Activated naive CD4-positive, alpha-beta T cell treated with anti-CD3 and anti-CD28 coated beads for 36 hours (primary cell): ENCODE measurements at regions of chr2 and their contacts with region 1.

Region 1: GRCh38 chr2:32063310-32064161 is at the start of gene SPAST:
- DNase-seq: peak; percentile 96
- H3K4me3 Mint-ChIP-seq: peak within 1 kb of the TSS; percentile 96
- H3K27ac Mint-ChIP-seq: peak within 1 kb of the TSS; percentile 89
- H3K4me1 Mint-ChIP-seq: peaks cover 24% of the 10 kb centered on the region
- H3K27me3 Mint-ChIP-seq: no peaks in the 10 kb centered on the region
- total RNA-seq, gene SPAST: 12.0 to 12.8 TPM

Region 2: DNA sequence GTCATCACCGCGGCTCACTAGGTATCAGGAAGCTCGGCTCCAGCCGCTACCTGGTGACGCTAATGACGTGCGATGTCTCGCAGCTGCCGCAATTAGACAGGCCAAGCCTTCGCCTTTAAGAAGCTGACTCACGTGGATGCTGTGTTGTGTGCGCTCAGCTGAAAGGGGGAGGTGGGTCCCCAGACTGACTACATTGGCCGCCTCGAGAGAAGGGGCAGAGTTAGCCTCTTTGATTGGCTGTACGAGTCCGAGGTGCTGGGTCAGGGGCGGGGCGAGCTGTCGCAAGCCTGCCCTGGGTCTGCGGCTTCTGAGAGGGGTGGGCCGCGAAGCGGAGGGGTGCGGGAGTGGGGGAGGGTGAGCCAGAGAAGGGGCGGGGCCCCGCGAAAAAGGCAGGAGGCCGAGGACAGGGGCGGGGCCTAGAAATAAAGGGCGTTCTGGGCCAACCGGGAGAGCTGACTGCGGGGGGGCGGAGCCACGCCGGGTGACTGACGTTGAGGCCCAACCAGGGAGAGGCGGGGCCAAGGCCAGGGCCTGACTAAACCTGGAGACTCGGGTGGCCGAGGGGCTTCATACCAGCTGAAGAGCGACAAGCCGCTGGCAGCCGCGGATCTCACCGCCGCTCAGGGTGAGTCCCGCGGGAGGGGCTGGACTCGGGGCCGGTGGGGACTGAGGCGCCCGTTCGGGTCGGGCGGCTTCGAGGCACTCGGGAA is 1916.9 kb before region 1 on chr2 and contains the start of gene YPEL5:
- CTCF ChIA-PET with region 1: no interaction called
- intact Hi-C with region 1: loop called (anchors 1 kb)
- DNase-seq: peak; percentile 99
- H3K4me3 Mint-ChIP-seq: peak within 1 kb of the TSS; percentile 84
- H3K27ac Mint-ChIP-seq: peak within 1 kb of the TSS; percentile 95
- H3K4me1 Mint-ChIP-seq: peaks cover 56% of the 10 kb centered on the region
- H3K27me3 Mint-ChIP-seq: no peaks in the 10 kb centered on the region
- total RNA-seq, gene YPEL5: 28.4 to 33.3 TPM

Region 3: DNA sequence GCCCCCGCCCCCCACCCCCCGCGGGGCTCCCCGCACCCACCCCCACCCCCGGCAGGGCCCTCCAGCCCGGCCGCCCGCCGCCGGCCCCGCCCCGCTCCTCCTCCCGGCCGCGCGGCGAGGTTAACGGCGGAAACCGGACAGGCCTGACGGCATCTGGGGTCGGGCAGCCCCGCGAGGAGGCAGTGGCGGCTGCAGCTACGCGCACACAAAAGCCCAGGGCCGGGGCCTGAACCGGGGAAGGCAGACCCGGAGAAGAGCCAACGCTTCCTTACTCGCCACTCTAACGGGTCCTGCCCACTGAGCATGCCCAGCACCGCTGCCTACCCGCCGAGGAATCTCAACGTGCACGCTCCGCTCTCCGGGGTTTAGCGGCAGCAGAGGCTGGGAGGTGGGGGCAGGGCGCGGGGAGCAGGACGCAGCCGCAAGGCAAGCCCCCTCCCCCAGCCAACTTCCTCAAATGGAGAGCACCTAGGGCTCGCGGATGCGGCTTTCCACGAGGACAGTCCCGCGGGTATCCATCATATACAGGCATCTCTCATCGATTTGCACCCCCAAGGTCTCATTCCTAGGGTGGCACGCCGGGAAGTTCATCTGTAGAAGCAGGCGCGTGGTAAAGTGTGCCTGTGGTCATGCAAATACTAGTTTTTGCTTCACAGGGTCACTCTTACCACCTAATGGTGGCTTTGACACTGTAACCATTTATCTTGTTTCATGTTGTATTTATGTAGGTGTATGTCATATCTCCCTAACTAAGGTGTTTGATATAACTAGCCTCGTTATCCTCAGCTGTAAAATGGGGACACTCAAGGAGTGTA is 52.7 kb before region 1 on chr2 and contains the start of gene MEMO1:
- CTCF ChIA-PET with region 1: interaction called, 3 read pairs
- intact Hi-C with region 1: loop called (anchors 1 kb)
- DNase-seq: peak; percentile 96
- H3K4me3 Mint-ChIP-seq: peak within 1 kb of the TSS; percentile 85
- H3K27ac Mint-ChIP-seq: peak within 1 kb of the TSS; percentile 92
- H3K4me1 Mint-ChIP-seq: peaks cover 41% of the 10 kb centered on the region
- H3K27me3 Mint-ChIP-seq: no peaks in the 10 kb centered on the region
- total RNA-seq, gene MEMO1: 39.5 to 42.0 TPM

Region 4: GRCh38 chr2:32135409-32135808 is 71.9 kb after region 1 on chr2:
- CTCF ChIA-PET with region 1: no interaction called
- intact Hi-C with region 1: loop called (anchors 1 kb)
- DNase-seq: no peak
- H3K4me3 Mint-ChIP-seq: no peak overlapping the region
- H3K27ac Mint-ChIP-seq: no peak overlapping the region
- H3K4me1 Mint-ChIP-seq: no peaks in the 10 kb centered on the region
- H3K27me3 Mint-ChIP-seq: no peaks in the 10 kb centered on the region

Region 5: DNA sequence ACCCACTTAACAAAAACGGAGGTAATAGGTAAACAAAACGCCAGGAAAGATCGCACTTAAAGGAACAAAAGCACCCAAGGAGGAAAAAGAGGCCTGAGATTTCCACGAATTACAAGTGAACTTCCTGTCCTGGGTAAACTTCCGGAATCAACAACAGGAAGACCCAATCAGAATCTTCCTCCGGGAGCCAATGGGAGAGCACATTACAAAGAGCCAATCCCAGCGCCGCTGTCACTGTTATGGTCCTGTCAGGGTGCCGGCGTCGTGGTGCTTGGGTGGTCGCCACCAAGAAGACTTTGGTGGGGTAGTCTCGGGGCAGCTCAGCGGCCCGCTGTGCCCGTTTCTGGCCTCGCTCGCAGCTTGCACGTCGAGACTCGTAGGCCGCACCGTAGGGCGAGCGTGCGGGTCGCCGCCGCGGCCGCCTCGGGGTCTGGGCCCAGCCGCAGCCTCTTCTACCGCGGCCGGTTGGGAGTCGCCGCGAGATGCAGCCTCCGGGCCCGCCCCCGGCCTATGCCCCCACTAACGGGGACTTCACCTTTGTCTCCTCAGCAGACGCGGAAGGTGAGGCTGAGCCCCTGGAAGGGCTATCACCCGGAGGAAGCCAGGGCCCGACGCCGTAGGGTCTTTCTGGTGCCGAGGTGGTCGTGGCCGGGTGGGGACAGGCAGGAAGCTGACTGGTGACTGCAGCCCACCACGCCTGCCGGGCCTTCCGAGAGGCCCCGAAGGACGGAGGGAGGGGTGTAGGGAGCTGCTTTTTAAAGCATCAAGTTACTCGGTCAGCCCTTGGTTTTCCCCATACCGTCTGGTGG is 214.3 kb after region 1 on chr2 and contains the start of gene YIPF4:
- CTCF ChIA-PET with region 1: no interaction called
- intact Hi-C with region 1: loop called (anchors 2 kb)
- DNase-seq: peak; percentile 91
- H3K4me3 Mint-ChIP-seq: peak within 1 kb of the TSS; percentile 84
- H3K27ac Mint-ChIP-seq: peak within 1 kb of the TSS; percentile 93
- H3K4me1 Mint-ChIP-seq: peaks cover 22% of the 10 kb centered on the region
- H3K27me3 Mint-ChIP-seq: no peaks in the 10 kb centered on the region
- total RNA-seq, gene YIPF4: 36.5 to 39.7 TPM

Region 6: GRCh38 chr2:32627814-32628579 is 564.5 kb after region 1 on chr2 and contains the start of gene TTC27:
- CTCF ChIA-PET with region 1: no interaction called
- intact Hi-C with region 1: loop called (anchors 1 kb)
- DNase-seq: peak; percentile 97
- H3K4me3 Mint-ChIP-seq: peak within 1 kb of the TSS; percentile 89
- H3K27ac Mint-ChIP-seq: peak within 1 kb of the TSS; percentile 87
- H3K4me1 Mint-ChIP-seq: peaks cover 31% of the 10 kb centered on the region
- H3K27me3 Mint-ChIP-seq: no peaks in the 10 kb centered on the region
- total RNA-seq, gene TTC27: 25.2 to 27.5 TPM

Region 7: DNA sequence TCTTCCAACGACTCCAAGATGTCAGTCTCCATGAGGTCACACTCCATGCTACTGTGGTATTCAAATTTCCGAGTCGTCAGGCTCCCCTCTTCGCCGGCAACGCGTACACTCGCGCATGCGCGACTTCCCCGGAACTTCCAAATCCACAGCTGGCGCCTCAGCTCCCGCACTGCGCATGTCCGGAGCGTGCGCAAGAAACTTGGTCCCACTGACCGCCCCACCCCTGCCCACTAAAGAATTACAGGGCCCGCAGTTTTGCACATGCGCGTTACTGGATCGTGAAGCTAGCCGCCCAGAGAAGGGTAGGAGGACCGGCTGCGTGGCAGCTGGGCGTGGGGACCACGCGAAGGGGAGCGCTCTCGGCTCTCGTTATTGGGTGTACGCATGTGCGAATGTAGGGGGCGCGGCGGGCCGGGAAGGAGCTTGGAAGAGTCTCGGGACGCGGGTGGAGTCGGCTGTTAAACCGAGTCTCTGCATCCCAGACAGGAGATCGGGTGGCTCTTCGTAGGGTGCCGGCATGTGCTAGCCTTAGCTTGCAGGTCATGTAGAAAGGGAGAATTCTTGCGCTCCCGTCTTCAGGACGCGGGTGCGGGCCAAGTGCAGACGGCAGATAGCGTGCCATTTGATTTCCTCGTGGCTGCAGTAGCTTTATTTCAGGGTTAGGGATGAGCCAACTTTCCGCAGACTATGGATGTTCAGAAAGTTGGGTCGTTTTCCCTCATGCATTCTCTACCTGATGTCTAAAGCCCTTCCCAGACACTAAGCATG is 1535.8 kb after region 1 on chr2 and contains the start of gene FAM98A:
- CTCF ChIA-PET with region 1: no interaction called
- intact Hi-C with region 1: loop called (anchors 5 kb)
- DNase-seq: peak; percentile 98
- H3K4me3 Mint-ChIP-seq: peak within 1 kb of the TSS; percentile 95
- H3K27ac Mint-ChIP-seq: peak within 1 kb of the TSS; percentile 87
- H3K4me1 Mint-ChIP-seq: peaks cover 22% of the 10 kb centered on the region
- H3K27me3 Mint-ChIP-seq: no peaks in the 10 kb centered on the region
- total RNA-seq, gene FAM98A: 45.4 to 46.1 TPM